ENCODE measurements at regions of chr5 and their contacts with region 1.

Region 1: GRCh38 chr5:140639148-140639979 is at the start of gene TMCO6:
- DNase-seq: peak; percentile 92
- H3K4me3 ChIP-seq: peak within 1 kb of the TSS; percentile 69 to 78 (median 76)
- H3K27ac ChIP-seq: peak within 1 kb of the TSS; percentile 38
- H3K4me1 ChIP-seq: peaks cover 11% of the 10 kb centered on the region
- H3K27me3 ChIP-seq: no peaks in the 10 kb centered on the region
- CTCF ChIP-seq: peak; percentile 21 to 66
- total RNA-seq, gene TMCO6: 4.0 to 16.5 TPM

Region 2: DNA sequence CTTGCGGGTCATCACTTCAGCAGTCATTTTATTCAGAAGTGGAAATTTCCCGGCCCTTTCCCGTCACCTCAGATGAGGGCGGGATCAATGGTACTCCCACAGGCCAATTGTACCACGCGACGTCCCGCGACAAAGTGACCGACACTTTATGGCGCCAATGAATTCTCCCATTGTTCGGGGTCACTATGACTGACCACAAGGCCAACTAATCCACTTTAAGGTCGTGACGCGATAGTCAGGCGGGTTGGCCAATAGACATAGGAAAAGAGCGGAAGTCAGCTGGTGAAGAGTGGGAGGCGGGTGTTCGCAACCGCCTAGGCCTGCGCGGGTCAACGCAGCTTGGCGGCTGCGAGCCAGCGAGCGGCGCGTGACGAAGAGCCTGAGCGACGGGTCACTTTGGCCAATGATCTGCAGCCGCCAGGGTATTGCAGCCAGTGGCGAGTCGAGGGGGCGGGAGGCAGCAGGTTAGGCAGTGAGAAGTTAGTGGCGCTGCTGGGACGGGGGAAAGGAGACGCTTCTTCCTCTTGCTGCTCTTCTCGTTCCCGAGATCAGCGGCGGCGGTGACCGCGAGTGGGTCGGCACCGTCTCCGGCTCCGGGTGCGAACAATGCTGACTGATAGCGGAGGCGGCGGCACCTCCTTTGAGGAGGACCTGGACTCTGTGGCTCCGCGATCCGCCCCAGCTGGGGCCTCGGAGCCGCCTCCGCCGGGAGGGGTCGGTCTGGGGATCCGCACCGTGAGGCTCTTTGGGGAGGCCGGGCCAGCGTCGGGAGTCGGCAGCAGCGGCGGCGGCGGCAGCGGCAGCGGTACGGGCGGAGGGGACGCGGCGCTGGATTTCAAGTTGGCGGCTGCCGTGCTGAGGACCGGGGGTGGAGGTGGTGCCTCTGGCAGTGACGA is 237.8 kb before region 1 on chr5 and contains the start of gene ANKHD1:
- CTCF ChIA-PET with region 1: no interaction called
- dilution Hi-C with region 1: no loop called
- in situ Hi-C with region 1: loop called in 1 of 2 experiments (anchors 10 kb)
- intact Hi-C with region 1: loop called (anchors 10 kb)
- DNase-seq: peak; percentile 100
- H3K4me3 ChIP-seq: peak within 1 kb of the TSS; percentile 93 to 99 (median 95)
- H3K27ac ChIP-seq: peak within 1 kb of the TSS; percentile 89
- H3K4me1 ChIP-seq: peaks cover 30% of the 10 kb centered on the region
- H3K27me3 ChIP-seq: no peaks in the 10 kb centered on the region
- CTCF ChIP-seq: no peak
- total RNA-seq, gene ANKHD1: 61.2 to 83.3 TPM

Region 3: DNA sequence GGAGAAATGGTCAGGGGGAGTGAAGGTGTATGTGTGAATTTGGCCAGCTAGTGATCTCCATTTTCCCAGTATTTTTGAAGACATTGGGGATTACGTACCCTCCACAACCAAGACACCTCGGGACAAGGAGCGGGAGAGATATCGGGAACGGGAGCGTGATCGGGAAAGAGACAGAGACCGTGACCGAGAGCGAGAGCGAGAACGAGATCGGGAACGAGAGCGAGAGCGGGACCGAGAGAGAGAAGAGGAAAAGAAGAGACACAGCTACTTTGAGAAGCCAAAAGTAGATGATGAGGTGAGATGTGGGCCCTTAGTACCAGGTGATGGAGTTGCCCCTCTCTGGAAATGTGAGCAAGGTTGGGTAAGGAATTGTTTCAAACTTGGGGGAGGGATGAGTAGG is 19.5 kb after region 1 on chr5:
- CTCF ChIA-PET with region 1: no interaction called
- dilution Hi-C with region 1: no loop called
- in situ Hi-C with region 1: no loop called
- intact Hi-C with region 1: no loop called
- DNase-seq: no peak
- H3K4me3 ChIP-seq: no peak overlapping the region
- H3K27ac ChIP-seq: no peak overlapping the region
- H3K4me1 ChIP-seq: no peaks in the 10 kb centered on the region
- H3K27me3 ChIP-seq: no peaks in the 10 kb centered on the region
- CTCF ChIP-seq: no peak

Region 4: GRCh38 chr5:140690941-140691924 is 51.9 kb after region 1 on chr5 and contains the starts of genes HARS1 and HARS2:
- CTCF ChIA-PET with region 1: no interaction called
- dilution Hi-C with region 1: no loop called
- in situ Hi-C with region 1: no loop called
- intact Hi-C with region 1: no loop called
- DNase-seq: peak; percentile 98
- H3K4me3 ChIP-seq: peak within 1 kb of the TSS; percentile 93 to 98 (median 95)
- H3K27ac ChIP-seq: peak within 1 kb of the TSS; percentile 66
- H3K4me1 ChIP-seq: peaks cover 4% of the 10 kb centered on the region
- H3K27me3 ChIP-seq: no peaks in the 10 kb centered on the region
- CTCF ChIP-seq: no peak
- total RNA-seq, gene HARS1: 60.3 to 104 TPM
- total RNA-seq, gene HARS2: 24.8 to 30.4 TPM

Measured in mammary epithelial cell (primary cell).